ENCODE measurements at regions of chr12 and their contacts with region 1.

Region 1: GRCh38 chr12:4011597-4011996 is 138.4 kb upstream of the PARP11 start:
- DNase-seq: peak; percentile 86 to 91
- H3K4me3 ChIP-seq: no peak overlapping the region
- H3K4me3 Mint-ChIP-seq: peak overlapping the region; percentile 12
- H3K27ac Mint-ChIP-seq: peak overlapping the region; percentile 35
- H3K4me1 ChIP-seq: peaks cover 68% of the 10 kb centered on the region
- H3K4me1 Mint-ChIP-seq: peaks cover 57% of the 10 kb centered on the region
- H3K27me3 ChIP-seq: no peaks in the 10 kb centered on the region
- H3K27me3 Mint-ChIP-seq: no peaks in the 10 kb centered on the region
- CTCF ChIP-seq: no peak

Region 2: GRCh38 chr12:3275171-3276041 is 736.2 kb before region 1 on chr12:
- CTCF ChIA-PET with region 1: no interaction called
- POLR2A ChIA-PET with region 1: no interaction called
- intact Hi-C with region 1: no loop called
- DNase-seq: peak; percentile 68 to 86
- H3K4me3 ChIP-seq: no peak overlapping the region
- H3K4me3 Mint-ChIP-seq: no peak overlapping the region
- H3K27ac Mint-ChIP-seq: no peak overlapping the region
- H3K4me1 ChIP-seq: no peaks in the 10 kb centered on the region
- H3K4me1 Mint-ChIP-seq: no peaks in the 10 kb centered on the region
- H3K27me3 ChIP-seq: no peaks in the 10 kb centered on the region
- H3K27me3 Mint-ChIP-seq: no peaks in the 10 kb centered on the region
- CTCF ChIP-seq: peak; percentile 99

Region 3: GRCh38 chr12:4030929-4031702 is 19.5 kb after region 1 on chr12:
- CTCF ChIA-PET with region 1: interaction called, 14 read pairs
- POLR2A ChIA-PET with region 1: interaction called, 53 read pairs
- intact Hi-C with region 1: loop called (anchors 1 kb)
- DNase-seq: peak; percentile 99
- H3K4me3 ChIP-seq: peak overlapping the region; percentile 44
- H3K4me3 Mint-ChIP-seq: peak overlapping the region; percentile 67
- H3K27ac Mint-ChIP-seq: peak overlapping the region; percentile 96
- H3K4me1 ChIP-seq: peaks cover 49% of the 10 kb centered on the region
- H3K4me1 Mint-ChIP-seq: peaks cover 57% of the 10 kb centered on the region
- H3K27me3 ChIP-seq: no peaks in the 10 kb centered on the region
- H3K27me3 Mint-ChIP-seq: no peaks in the 10 kb centered on the region
- CTCF ChIP-seq: no peak

Region 4: DNA sequence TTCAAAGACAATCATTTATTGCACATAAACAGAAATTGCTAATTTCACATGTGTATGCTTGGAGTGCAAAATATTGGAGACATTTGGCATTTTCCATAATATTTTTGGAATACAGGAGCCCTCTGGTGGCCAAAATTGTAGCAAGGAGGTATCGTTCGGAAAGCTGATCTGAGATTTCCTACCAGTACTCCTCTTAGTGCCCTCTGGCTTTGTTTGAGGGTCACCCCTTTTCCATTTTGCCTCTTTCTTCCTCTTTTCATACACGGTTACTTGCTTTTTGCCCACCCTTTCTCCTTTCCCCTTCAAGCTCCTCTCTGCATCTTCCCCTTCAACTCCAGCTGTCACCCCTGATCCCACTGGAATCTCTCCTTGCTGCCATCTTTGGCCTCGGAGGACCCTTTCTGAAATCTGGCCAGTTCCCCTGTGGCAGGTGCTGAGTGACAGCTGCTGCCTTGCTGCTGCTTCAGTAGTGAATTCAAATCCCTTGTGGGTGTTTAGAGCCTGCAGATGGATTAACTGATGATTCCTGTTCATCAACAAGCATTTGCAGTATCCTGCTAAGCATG is 26.2 kb after region 1 on chr12:
- CTCF ChIA-PET with region 1: interaction called, 11 read pairs
- POLR2A ChIA-PET with region 1: no interaction called
- intact Hi-C with region 1: no loop called
- DNase-seq: peak; percentile 54 to 82
- H3K4me3 ChIP-seq: no peak overlapping the region
- H3K4me3 Mint-ChIP-seq: no peak overlapping the region
- H3K27ac Mint-ChIP-seq: no peak overlapping the region
- H3K4me1 ChIP-seq: peaks cover 36% of the 10 kb centered on the region
- H3K4me1 Mint-ChIP-seq: peaks cover 38% of the 10 kb centered on the region
- H3K27me3 ChIP-seq: no peaks in the 10 kb centered on the region
- H3K27me3 Mint-ChIP-seq: no peaks in the 10 kb centered on the region
- CTCF ChIP-seq: peak; percentile 89 to 95

Region 5: DNA sequence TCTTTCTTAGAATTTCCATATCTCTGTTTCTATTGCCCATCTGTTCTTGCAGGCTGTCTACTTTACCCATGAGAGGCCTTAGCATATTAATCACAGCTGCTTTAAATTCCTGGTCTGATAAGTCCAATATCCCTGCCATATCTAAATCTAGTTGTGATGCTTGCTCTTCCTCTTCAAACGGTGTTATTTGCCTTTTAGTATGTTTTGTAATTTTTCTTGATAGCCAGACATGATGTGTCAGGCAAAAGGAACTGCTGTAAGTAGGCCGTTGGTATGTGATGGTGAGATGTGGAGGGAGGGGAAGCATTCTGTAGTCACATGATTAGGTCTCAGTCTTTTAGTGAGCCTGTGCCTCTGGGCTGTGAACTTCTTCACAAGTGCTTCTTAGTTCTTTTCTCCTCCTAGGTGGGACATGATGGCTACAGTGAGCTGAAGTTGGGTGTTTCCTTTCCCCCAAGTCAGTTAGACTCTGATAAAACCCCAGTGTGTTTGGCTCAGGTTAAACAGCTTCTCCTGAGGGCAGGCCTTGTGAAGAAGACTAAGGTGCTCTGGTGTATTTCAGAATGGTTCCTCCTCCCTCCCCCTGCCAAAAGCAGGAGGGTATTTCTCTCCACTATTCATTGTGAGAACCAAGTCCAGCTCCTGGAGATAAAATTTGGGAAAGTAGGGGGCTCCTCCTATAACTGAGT is 57.5 kb after region 1 on chr12:
- CTCF ChIA-PET with region 1: no interaction called
- POLR2A ChIA-PET with region 1: no interaction called
- intact Hi-C with region 1: loop called (anchors 1 kb)
- DNase-seq: peak; percentile 66 to 67
- H3K4me3 ChIP-seq: no peak overlapping the region
- H3K4me3 Mint-ChIP-seq: no peak overlapping the region
- H3K27ac Mint-ChIP-seq: no peak overlapping the region
- H3K4me1 ChIP-seq: peaks cover 24% of the 10 kb centered on the region
- H3K4me1 Mint-ChIP-seq: no peaks in the 10 kb centered on the region
- H3K27me3 ChIP-seq: no peaks in the 10 kb centered on the region
- H3K27me3 Mint-ChIP-seq: peaks cover 6% of the 10 kb centered on the region
- CTCF ChIP-seq: no peak

Measured in Caco-2 (cell line).